Vagina (tissue), 2 donors: ENCODE measurements at regions of chr7 and their contacts with region 1.

Region 1: DNA sequence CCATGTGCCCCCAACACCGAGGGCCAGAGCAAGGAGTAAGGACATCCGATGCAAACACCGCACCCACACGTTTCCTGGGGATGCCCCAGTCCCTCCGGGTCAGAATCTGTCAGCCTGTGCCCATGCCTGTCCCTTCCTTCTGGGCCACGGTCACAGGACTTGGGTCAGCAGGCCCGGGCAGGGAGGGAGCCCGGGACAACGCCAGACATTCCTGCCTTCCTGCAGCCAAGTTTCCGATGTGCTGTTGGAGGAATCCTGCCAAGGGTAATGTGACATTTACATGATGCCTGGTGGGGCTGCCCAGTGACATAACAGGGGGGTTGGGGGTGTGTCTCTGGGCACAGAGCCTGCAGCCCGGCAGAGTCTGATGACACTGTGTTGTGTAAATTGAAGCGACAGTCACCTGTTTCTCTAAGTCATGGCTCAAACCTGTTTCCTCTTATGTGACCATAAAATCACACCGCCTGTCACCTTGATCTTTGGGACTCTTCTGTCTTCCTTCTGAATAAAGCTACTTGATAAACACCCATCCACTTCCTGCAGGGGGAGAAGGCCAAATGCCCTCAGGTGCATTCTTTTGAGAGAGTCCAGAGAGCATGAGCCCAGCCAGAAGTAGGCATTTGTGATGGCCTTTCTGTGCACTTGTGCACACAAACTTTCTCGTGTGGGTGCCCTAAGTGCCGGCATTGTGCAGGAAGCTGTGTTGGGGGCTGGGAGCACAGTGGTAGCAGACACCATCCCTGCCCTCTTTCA is 175.3 kb upstream of the RHEB start:
- DNase-seq: no peak
- H3K4me3 ChIP-seq: no peak overlapping the region
- H3K27ac ChIP-seq: no peak overlapping the region
- H3K4me1 ChIP-seq: peaks cover 44% of the 10 kb centered on the region
- H3K27me3 ChIP-seq: no peaks in the 10 kb centered on the region
- CTCF ChIP-seq: no peak
- POLR2A ChIP-seq: no peak

Region 2: DNA sequence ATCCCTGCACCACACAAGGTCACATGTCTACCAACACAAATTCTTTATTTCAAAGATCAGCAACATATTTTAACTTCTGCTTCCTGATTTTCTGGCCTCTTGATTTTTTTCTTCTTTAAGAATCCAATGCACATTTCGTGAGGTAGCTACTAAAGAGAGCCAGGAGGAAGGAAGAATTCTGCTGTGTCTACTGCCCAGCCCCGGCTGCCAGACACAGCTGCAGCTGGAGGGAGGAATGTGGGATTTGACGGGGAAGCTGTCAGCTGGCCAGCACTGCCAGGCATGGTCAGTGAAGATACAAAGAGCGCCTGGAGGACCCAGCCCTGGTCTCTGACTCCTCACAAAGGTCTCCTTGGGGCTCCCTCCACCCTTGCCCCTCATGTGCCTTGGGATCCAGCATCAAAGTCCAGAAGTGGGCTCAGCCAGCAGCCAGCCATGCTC is 849.6 kb before region 1 on chr7:
- intact Hi-C with region 1: no loop called
- DNase-seq: peak; percentile 44 to 70
- H3K4me3 ChIP-seq: no peak overlapping the region
- H3K27ac ChIP-seq: no peak overlapping the region
- H3K4me1 ChIP-seq: peaks cover 9% of the 10 kb centered on the region
- H3K27me3 ChIP-seq: no peaks in the 10 kb centered on the region
- CTCF ChIP-seq: no peak
- POLR2A ChIP-seq: no peak

Region 3: DNA sequence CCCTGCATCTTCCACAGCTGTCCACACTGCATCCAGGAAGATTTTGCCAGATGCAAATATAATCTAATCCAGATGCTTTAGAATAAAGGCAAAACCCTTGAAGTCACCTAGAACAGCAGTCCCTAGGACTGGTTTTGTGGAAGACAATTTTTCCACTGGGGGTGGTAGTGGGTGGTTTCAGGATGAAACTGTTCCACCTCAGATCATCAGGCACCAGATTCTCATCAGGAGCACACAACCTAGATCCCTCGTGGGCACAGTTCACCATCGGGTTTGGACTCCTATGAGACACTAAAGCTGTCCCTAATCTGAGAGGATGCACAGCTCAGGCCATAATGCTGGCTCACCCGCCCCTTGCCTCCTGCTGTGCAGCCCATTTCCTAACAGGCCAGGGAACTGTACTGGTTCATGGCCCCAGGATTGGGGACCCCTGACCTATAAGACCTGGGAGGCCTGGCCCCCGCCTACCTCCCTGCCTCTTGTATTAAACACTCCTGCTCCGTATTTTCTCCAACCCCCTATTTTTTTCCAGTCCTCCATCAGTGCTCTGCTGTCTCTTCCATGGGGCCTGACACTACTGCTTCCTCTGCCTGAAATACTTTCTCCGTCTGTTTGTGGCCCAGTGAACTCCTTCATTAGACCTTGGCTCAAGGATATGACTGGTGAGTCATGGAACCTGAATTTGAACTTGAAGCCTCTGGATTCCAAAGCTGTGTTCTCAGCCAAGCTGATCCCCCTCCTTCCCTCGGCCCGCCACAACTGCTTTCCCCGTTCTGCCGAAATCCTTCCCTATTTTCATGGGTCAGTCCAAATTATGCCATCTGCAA is 95.4 kb before region 1 on chr7:
- intact Hi-C with region 1: no loop called
- DNase-seq: peak in 1 of 2 donors; percentile 89
- H3K4me3 ChIP-seq: no peak overlapping the region
- H3K27ac ChIP-seq: peak overlapping the region; percentile 39
- H3K4me1 ChIP-seq: peaks cover 22% of the 10 kb centered on the region
- H3K27me3 ChIP-seq: no peaks in the 10 kb centered on the region
- CTCF ChIP-seq: no peak
- POLR2A ChIP-seq: no peak

Region 4: DNA sequence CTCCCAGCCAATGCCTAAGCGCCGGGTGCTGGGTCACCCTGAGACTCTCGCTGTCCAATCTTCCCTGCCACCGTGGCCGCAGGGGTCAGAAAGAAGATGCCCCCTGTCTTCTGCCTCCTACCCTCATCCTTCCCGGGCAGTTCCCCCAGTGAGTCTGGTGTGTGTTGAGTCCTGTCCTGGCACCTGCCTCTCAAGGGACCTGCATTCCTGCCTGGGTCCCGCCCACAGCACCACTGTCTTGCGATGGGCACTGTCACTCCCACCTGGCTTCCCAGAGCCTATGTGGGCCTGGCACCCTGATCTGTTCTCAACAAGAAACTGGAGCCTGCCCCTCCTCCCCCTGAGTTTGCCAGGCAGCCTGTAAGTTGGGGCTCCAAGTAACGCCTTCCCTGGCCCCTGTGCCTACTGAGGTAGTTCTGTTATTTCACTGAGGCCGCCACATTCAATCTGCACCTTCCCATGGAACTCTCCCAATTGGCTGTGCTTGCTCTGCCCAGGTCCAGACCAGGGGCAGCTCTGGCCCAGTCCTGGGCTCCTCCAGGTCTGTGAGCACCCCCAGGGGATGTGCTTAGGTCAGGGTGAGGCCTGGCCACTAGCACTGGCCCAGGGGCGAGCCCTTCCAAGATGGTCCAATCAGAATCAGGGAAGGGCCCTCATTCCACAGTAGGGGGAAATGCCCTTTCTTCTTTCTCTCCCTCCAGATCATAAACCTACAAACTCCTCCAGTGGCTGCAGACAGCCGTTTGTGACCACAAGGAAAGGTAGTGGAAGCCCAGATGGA is 24.6 kb after region 1 on chr7:
- intact Hi-C with region 1: loop called (anchors 1 kb)
- DNase-seq: no peak
- H3K4me3 ChIP-seq: no peak overlapping the region
- H3K27ac ChIP-seq: no peak overlapping the region
- H3K4me1 ChIP-seq: no peaks in the 10 kb centered on the region
- H3K27me3 ChIP-seq: no peaks in the 10 kb centered on the region
- CTCF ChIP-seq: no peak
- POLR2A ChIP-seq: no peak